ENCODE measurements at regions of chr3 and their contacts with region 1.

Region 1: GRCh38 chr3:160434071-160434470 is 15.5 kb downstream of the TRIM59 start:
- DNase-seq: peak; percentile 80
- H3K4me3 ChIP-seq: no peak overlapping the region
- H3K27ac ChIP-seq: peak overlapping the region; percentile 36
- H3K4me1 ChIP-seq: peaks cover 14% of the 10 kb centered on the region
- H3K27me3 ChIP-seq: no peaks in the 10 kb centered on the region

Region 2: DNA sequence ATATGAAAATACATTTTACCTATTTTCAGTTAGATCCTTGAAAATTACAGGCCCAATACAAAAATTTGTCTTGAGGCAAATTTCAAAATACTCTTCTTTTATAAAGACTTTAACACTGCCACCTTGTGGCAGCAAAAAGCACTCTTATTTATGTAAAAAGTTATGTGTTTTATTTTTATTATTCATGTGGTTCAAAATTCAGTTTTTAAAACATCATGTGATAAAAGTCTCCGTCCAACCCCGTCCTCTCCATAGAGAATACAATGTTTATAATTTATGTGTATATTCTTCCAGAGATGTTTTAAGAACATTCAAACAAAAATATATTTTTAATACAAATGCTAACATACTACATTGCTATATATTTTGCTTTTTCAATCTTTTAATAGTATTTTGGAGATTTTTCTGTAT is 52.4 kb after region 1 on chr3:
- in situ Hi-C with region 1: loop called (anchors 10 kb)
- DNase-seq: peak; percentile 79
- H3K4me3 ChIP-seq: peak overlapping the region; percentile 50; the same call in 1 of the 2 replicates
- H3K27ac ChIP-seq: no peak overlapping the region
- H3K4me1 ChIP-seq: peaks cover 10% of the 10 kb centered on the region
- H3K27me3 ChIP-seq: no peaks in the 10 kb centered on the region

Region 3: GRCh38 chr3:160546727-160547126 is 112.7 kb after region 1 on chr3:
- in situ Hi-C with region 1: no loop called
- DNase-seq: no peak
- H3K4me3 ChIP-seq: no peak overlapping the region
- H3K27ac ChIP-seq: no peak overlapping the region
- H3K4me1 ChIP-seq: peaks cover 9% of the 10 kb centered on the region; the same call in 1 of the 2 replicates
- H3K27me3 ChIP-seq: no peaks in the 10 kb centered on the region

Measured in GM23248 (cell line).